Activated CD4-positive, alpha-beta memory T cell treated with anti-CD3 and anti-CD28 coated beads for 36 hours (primary cell): ENCODE measurements at regions of chr3 and their contacts with region 1.

Region 1: GRCh38 chr3:45037734-45038455 is 11.8 kb downstream of the CLEC3B start:
- DNase-seq: peak; percentile 95
- H3K4me3 Mint-ChIP-seq: no peak overlapping the region
- H3K27ac Mint-ChIP-seq: no peak overlapping the region
- H3K4me1 Mint-ChIP-seq: peaks cover 34% of the 10 kb centered on the region
- H3K27me3 Mint-ChIP-seq: peaks cover 28% of the 10 kb centered on the region

Region 2: GRCh38 chr3:44529927-44530326 is 508.0 kb before region 1 on chr3:
- CTCF ChIA-PET with region 1: interaction called, 4 read pairs
- POLR2A ChIA-PET with region 1: no interaction called
- intact Hi-C with region 1: loop called (anchors 2 kb)
- DNase-seq: peak; percentile 23
- H3K4me3 Mint-ChIP-seq: no peak overlapping the region
- H3K27ac Mint-ChIP-seq: no peak overlapping the region
- H3K4me1 Mint-ChIP-seq: no peaks in the 10 kb centered on the region
- H3K27me3 Mint-ChIP-seq: peaks cover 13% of the 10 kb centered on the region

Region 3: GRCh38 chr3:44845528-44846520 is 192.1 kb before region 1 on chr3:
- CTCF ChIA-PET with region 1: no interaction called
- POLR2A ChIA-PET with region 1: no interaction called
- intact Hi-C with region 1: no loop called
- DNase-seq: no peak
- H3K4me3 Mint-ChIP-seq: no peak overlapping the region
- H3K27ac Mint-ChIP-seq: no peak overlapping the region
- H3K4me1 Mint-ChIP-seq: no peaks in the 10 kb centered on the region
- H3K27me3 Mint-ChIP-seq: no peaks in the 10 kb centered on the region

Region 4: GRCh38 chr3:45055411-45056143 is 17.7 kb after region 1 on chr3:
- CTCF ChIA-PET with region 1: interaction called, 22 read pairs
- POLR2A ChIA-PET with region 1: no interaction called
- intact Hi-C with region 1: no loop called
- DNase-seq: no peak
- H3K4me3 Mint-ChIP-seq: no peak overlapping the region
- H3K27ac Mint-ChIP-seq: no peak overlapping the region
- H3K4me1 Mint-ChIP-seq: peaks cover 18% of the 10 kb centered on the region
- H3K27me3 Mint-ChIP-seq: peaks cover 4% of the 10 kb centered on the region

Region 5: DNA sequence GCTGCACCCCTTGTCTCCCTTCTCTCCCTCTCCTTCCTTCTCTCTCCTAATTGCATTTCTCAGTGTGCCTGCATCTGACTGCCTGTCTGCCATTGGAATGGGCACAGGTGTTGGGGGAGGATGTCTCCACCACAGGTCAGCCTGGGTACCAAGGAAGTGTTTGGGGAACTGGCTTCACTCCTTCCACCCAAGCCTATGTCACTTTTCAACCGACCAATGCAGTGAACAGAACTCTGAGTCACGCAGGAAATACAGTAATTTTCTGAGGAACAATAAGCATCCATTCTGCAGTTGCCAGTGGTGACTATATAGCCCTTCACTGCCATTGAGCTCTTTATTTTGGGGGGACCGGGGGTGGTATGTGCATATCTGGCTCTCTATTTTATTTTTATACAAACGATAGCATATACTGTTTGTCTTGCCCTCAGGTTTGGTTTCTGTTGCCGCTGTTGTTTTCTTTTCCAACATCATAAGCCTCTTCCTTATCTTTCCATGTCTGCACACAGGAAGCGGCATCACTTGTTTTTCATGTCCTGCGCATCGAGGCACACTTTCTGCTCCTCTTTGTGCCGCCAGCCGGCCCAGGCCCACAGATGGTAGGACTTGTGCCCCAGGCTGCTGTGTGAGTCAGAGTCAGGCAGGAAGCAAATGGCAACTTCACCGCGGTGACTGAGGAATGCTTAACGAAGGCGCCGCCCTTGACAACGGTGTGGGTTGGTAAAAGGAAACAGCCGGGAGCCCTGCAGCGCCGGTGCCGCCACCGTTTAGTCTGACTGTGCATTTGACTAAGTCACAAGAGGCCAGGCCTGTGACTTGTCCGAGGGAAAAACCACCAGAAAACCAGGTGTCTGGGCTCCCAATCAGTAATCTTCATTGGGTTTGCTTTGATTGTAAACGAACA is 129.4 kb after region 1 on chr3:
- CTCF ChIA-PET with region 1: interaction called, 9 read pairs
- POLR2A ChIA-PET with region 1: no interaction called
- intact Hi-C with region 1: loop called (anchors 1 kb)
- DNase-seq: peak; percentile 95
- H3K4me3 Mint-ChIP-seq: peak overlapping the region; percentile 58
- H3K27ac Mint-ChIP-seq: peak overlapping the region; percentile 88
- H3K4me1 Mint-ChIP-seq: peaks cover 24% of the 10 kb centered on the region
- H3K27me3 Mint-ChIP-seq: no peaks in the 10 kb centered on the region

Region 6: GRCh38 chr3:45210308-45211041 is 172.6 kb after region 1 on chr3:
- CTCF ChIA-PET with region 1: interaction called, 530 read pairs
- POLR2A ChIA-PET with region 1: interaction called, 3 read pairs
- intact Hi-C with region 1: loop called (anchors 1 kb)
- DNase-seq: peak; percentile 86
- H3K4me3 Mint-ChIP-seq: no peak overlapping the region
- H3K27ac Mint-ChIP-seq: no peak overlapping the region
- H3K4me1 Mint-ChIP-seq: peaks cover 18% of the 10 kb centered on the region
- H3K27me3 Mint-ChIP-seq: peaks cover 11% of the 10 kb centered on the region

Region 7: DNA sequence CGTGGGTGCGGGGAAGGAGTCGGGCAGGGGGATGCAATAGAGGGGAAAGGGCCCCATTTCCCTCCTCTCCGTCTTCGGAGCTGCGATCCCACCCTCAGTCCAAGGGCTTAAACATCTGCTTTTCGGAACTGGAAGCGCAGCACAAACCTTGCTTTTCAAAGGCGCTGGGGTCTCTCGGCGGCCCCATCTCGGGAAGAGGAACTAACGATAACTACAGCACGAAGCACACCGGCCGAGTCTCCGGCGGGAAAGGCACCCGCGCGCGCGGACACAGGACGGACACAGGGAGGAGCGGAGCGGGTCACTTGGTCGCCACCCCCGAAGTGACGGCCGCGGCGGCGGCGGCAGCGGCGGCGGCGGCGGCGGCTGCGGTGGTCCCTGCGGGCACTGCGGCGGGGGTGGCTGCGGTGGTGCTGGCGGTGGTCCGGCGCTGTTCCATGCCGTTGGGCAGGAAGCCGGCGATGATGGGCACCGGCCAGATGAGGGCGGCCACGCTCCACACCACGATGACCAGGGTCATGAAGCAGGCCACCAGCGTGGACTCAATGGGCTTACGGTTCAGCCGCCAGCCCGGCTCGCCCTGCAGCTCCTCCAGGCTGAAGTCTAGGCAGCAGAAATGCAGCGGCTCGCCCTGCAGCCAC is 187.0 kb after region 1 on chr3:
- CTCF ChIA-PET with region 1: interaction called, 23 read pairs
- POLR2A ChIA-PET with region 1: interaction called, 3 read pairs
- intact Hi-C with region 1: loop called (anchors 5 kb)
- DNase-seq: peak; percentile 61
- H3K4me3 Mint-ChIP-seq: peak overlapping the region; percentile 65
- H3K27ac Mint-ChIP-seq: no peak overlapping the region
- H3K4me1 Mint-ChIP-seq: peaks cover 14% of the 10 kb centered on the region
- H3K27me3 Mint-ChIP-seq: peaks cover 68% of the 10 kb centered on the region

Region 8: DNA sequence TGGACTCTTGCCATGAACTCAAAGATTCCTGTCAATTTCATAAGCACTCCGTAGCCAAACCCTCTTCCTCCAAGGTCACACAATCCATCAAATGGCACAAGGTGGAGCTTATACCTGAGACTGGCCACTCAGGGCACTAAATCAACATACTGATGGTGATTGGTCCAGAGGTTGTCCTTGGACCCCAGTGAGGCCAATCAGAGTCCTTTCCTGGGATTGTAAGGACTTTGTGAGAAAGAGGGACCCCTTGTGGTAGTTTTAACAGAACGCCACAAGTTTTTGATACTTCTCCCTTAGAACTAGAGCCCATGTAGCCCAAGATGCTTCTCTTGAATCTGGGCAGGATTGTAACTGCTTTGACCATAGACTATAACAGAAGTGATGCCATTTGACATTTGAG is 306.1 kb after region 1 on chr3:
- CTCF ChIA-PET with region 1: interaction called, 3 read pairs
- POLR2A ChIA-PET with region 1: no interaction called
- intact Hi-C with region 1: loop called (anchors 10 kb)
- DNase-seq: no peak
- H3K4me3 Mint-ChIP-seq: no peak overlapping the region
- H3K27ac Mint-ChIP-seq: no peak overlapping the region
- H3K4me1 Mint-ChIP-seq: no peaks in the 10 kb centered on the region
- H3K27me3 Mint-ChIP-seq: no peaks in the 10 kb centered on the region

Region 9: DNA sequence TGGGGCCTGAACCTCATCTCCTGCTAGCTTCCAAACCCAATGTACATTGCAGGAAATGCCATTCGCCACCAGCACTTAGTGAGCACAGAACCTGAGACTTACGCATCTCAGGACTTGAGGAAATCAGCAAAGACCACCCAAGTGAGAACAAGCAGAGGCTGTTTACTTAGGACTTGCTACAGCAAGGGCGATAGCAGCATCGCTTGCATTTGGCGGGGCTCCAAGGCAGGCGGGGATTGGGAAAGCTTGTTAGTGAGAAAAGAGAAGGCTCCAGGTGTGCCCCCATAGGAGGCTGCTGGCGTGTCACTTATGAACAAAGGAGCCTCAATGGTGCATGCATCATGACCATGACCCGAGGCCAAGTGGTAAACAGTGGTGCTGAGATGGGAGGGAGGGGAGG is 738.7 kb after region 1 on chr3:
- CTCF ChIA-PET with region 1: no interaction called
- POLR2A ChIA-PET with region 1: no interaction called
- intact Hi-C with region 1: no loop called
- DNase-seq: no peak
- H3K4me3 Mint-ChIP-seq: no peak overlapping the region
- H3K27ac Mint-ChIP-seq: no peak overlapping the region
- H3K4me1 Mint-ChIP-seq: peaks cover 13% of the 10 kb centered on the region
- H3K27me3 Mint-ChIP-seq: peaks cover 5% of the 10 kb centered on the region